ENCODE measurements at regions of chr17 and their contacts with region 1.

Region 1: GRCh38 chr17:45135192-45135977 is at the start of gene ACBD4:
- DNase-seq: peak; percentile 98 to 99
- ATAC-seq: peak; percentile 86 to 96 (median 88)
- H3K4me3 ChIP-seq: peak within 1 kb of the TSS; percentile 81
- H3K4me3 Mint-ChIP-seq: peak within 1 kb of the TSS; percentile 90
- H3K27ac ChIP-seq: peak within 1 kb of the TSS; percentile 69
- H3K27ac Mint-ChIP-seq: peak within 1 kb of the TSS; percentile 77 to 90
- H3K4me1 ChIP-seq: peaks cover 33% of the 10 kb centered on the region
- H3K4me1 Mint-ChIP-seq: peaks cover 12 to 20% of the 10 kb centered on the region in 2 donors
- H3K27me3 ChIP-seq: no peaks in the 10 kb centered on the region
- H3K27me3 Mint-ChIP-seq: peaks cover 0 to 3% of the 10 kb centered on the region in 2 donors
- CTCF ChIP-seq: peak; percentile 100
- total RNA-seq, gene ACBD4: 12.0 to 15.9 (median 14.2) TPM

Region 2: DNA sequence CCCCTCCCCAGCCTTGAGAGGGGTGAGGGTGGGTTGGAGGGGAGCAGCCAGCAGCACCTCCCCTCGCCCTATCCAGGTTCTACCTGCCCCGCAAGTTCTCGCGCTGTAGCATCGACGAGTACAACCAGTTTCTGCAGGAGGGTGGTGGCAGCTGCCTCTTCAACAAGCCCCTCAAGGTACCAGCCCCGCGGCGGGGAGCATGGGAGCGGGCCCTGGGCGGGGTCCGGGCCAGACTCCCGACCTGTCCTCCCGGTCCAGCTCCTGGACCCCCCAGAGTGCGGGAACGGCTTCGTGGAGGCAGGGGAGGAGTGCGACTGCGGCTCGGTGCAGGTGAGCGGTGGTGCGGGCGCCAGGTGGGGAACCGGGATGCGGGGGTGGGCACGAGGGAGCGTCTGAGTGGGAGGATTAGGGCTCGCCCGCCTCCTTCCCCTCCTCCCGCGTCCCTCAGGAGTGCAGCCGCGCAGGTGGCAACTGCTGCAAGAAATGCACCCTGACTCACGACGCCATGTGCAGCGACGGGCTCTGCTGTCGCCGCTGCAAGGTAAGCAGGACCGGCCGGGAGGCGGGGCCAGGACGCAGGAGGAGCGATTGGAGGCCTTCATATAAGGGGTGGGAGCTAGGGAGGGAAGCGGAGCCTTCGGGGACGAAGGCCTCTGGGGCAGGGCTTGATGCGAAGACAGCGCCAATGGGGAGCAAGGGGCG is 360.1 kb before region 1 on chr17:
- intact Hi-C with region 1: loop called (anchors 2 kb)
- DNase-seq: peak; percentile 82 to 99
- ATAC-seq: peak; percentile 87 to 91 (median 91)
- H3K4me3 ChIP-seq: peak overlapping the region; percentile 52
- H3K4me3 Mint-ChIP-seq: peak overlapping the region; percentile 91
- H3K27ac ChIP-seq: no peak overlapping the region
- H3K27ac Mint-ChIP-seq: peak overlapping the region in 1 of 2 donors; percentile 66
- H3K4me1 ChIP-seq: peaks cover 29% of the 10 kb centered on the region
- H3K4me1 Mint-ChIP-seq: peaks cover 0 to 27% of the 10 kb centered on the region in 2 donors
- H3K27me3 ChIP-seq: peaks cover 2% of the 10 kb centered on the region
- H3K27me3 Mint-ChIP-seq: peaks cover 0 to 7% of the 10 kb centered on the region in 2 donors
- CTCF ChIP-seq: peak; percentile 58

Region 3: DNA sequence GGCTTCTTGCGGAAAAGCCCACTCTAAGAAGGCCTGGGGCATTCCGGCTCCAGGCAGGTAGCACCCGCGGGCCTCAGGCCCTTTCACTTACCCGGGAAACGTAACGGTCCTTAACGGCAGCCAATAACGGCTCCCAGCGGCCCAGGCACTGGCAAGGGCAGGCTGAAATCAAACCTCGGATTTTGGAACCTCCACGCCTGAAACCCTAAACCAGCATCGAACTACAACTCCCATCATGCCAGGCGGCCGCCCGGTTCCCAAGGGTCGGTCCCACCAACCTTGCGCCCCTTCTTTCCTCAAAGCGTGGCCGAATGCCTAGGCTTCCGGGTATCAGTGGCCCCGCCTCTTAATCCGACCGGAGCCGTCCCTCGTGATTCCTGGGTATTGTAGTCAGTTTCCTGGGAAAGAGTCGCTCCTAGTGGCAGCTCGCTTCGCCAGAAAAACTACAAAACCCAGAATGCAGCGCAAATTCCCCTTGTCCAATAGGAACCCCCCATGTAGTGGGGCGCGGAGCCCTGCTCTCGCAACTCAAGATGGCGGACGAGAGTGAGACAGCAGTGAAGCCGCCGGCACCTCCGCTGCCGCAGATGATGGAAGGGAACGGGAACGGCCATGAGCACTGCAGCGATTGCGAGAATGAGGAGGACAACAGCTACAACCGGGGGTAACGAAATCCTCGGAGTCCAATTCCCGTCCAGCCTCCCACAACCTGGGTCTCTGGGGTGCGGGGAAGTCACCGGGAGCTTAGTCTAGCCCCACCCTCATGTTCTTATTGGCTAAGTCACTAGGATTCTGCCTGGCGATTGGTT is 74.4 kb before region 1 on chr17 and contains the start of gene NMT1:
- intact Hi-C with region 1: loop called (anchors 2 kb)
- DNase-seq: peak; percentile 90 to 98
- ATAC-seq: peak; percentile 89 to 97 (median 89)
- H3K4me3 ChIP-seq: peak within 1 kb of the TSS; percentile 87
- H3K4me3 Mint-ChIP-seq: peak within 1 kb of the TSS; percentile 91
- H3K27ac ChIP-seq: peak within 1 kb of the TSS; percentile 84
- H3K27ac Mint-ChIP-seq: peak within 1 kb of the TSS; percentile 90 to 100
- H3K4me1 ChIP-seq: peaks cover 20% of the 10 kb centered on the region
- H3K4me1 Mint-ChIP-seq: peaks cover 26 to 31% of the 10 kb centered on the region in 2 donors
- H3K27me3 ChIP-seq: no peaks in the 10 kb centered on the region
- H3K27me3 Mint-ChIP-seq: no peaks in the 10 kb centered on the region
- CTCF ChIP-seq: no peak
- total RNA-seq, gene NMT1: 56.6 to 94.7 (median 77.6) TPM

Region 4: DNA sequence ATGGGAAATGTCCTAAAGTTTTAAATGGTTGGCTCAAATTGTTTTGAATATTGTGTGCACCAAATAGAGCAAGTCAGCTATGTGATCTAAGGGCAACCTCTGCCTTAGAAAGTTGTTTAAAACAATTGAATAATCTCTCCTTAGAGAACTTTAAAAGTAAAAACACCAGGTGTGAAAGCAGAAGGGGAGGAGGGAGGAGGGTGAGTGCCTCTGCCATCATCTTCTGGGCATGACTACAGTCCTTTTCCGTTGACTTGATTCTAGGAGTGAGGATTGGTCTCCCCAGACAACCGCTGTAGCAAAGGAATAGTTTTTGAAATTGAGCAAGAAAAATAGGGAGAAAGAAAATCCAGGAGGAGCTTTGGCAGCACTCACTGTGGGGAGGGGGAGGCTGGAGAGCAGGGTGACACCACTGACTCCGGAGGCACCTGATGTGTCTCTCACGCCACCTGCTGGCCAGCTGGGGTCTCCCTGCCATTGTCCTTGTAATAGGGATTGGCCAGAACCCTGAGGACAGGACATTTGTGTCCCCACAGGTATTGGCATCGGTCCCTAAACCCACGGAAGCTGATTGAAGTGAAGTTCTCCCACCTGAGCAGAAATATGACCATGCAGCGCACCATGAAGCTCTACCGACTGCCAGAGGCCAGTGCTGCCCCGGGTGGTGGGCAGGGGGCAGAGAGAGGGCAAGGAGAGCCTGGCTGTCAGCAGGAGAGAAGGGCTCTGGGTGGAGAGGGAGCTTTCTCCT is 36.3 kb before region 1 on chr17:
- intact Hi-C with region 1: no loop called
- DNase-seq: peak; percentile 67 to 82
- ATAC-seq: peak; percentile 86 to 97 (median 91)
- H3K4me3 ChIP-seq: no peak overlapping the region
- H3K4me3 Mint-ChIP-seq: no peak overlapping the region
- H3K27ac ChIP-seq: no peak overlapping the region
- H3K27ac Mint-ChIP-seq: peak overlapping the region in 1 of 2 donors; percentile 64
- H3K4me1 ChIP-seq: no peaks in the 10 kb centered on the region
- H3K4me1 Mint-ChIP-seq: peaks cover 0 to 6% of the 10 kb centered on the region in 2 donors
- H3K27me3 ChIP-seq: no peaks in the 10 kb centered on the region
- H3K27me3 Mint-ChIP-seq: no peaks in the 10 kb centered on the region
- CTCF ChIP-seq: peak; percentile 82

Region 5: DNA sequence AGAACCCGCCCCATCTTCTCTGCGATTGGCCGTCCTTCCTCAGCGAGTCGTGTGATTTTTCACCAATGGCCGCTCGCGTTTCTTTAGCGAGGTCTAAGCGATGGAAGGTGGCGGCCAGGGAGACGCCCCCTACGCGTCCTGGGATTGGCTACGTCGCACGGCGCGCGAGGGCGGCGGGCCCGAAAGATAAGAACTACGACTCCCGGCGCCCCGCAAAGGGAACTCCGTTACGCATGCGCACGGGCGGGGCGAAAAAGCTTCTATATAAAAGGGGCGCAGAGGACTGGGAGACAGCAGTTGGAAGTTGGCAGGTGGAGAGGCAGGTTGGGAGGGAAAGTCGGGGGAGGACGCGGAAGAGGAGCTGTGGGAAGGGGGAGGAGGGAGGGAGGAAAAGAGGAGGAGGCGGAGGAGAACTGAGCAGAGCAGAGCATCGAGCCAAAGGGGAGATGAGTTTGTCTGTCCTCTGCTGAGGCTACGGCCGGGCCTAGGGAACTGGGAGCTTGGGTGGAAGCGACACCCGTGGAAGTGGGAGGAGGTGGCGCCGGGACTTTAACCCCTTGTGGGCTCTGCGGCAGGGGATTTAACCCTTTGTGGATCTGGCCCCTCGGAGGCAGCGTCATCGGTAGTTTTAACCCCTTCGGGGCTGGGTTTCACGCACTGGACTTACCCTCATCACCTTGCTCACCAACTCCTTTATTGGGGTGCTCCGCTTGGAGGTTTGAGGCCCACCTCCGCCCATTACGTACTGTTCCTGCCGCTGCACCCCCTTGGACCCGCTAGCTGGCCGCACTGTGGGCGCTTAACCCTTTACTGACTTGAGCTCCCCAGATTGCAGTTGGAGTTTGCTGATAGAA is 13.0 kb after region 1 on chr17 and contains the start of gene HEXIM1:
- intact Hi-C with region 1: loop called (anchors 1 kb)
- DNase-seq: peak; percentile 99
- ATAC-seq: peak; percentile 77 to 92 (median 82)
- H3K4me3 ChIP-seq: peak within 1 kb of the TSS; percentile 88
- H3K4me3 Mint-ChIP-seq: peak within 1 kb of the TSS; percentile 100
- H3K27ac ChIP-seq: peak within 1 kb of the TSS; percentile 98
- H3K27ac Mint-ChIP-seq: peak within 1 kb of the TSS; percentile 98 to 100
- H3K4me1 ChIP-seq: peaks cover 52% of the 10 kb centered on the region
- H3K4me1 Mint-ChIP-seq: peaks cover 51 to 65% of the 10 kb centered on the region in 2 donors
- H3K27me3 ChIP-seq: no peaks in the 10 kb centered on the region
- H3K27me3 Mint-ChIP-seq: no peaks in the 10 kb centered on the region
- CTCF ChIP-seq: no peak
- total RNA-seq, gene HEXIM1: 64.9 to 80.7 (median 79.8) TPM

Region 6: DNA sequence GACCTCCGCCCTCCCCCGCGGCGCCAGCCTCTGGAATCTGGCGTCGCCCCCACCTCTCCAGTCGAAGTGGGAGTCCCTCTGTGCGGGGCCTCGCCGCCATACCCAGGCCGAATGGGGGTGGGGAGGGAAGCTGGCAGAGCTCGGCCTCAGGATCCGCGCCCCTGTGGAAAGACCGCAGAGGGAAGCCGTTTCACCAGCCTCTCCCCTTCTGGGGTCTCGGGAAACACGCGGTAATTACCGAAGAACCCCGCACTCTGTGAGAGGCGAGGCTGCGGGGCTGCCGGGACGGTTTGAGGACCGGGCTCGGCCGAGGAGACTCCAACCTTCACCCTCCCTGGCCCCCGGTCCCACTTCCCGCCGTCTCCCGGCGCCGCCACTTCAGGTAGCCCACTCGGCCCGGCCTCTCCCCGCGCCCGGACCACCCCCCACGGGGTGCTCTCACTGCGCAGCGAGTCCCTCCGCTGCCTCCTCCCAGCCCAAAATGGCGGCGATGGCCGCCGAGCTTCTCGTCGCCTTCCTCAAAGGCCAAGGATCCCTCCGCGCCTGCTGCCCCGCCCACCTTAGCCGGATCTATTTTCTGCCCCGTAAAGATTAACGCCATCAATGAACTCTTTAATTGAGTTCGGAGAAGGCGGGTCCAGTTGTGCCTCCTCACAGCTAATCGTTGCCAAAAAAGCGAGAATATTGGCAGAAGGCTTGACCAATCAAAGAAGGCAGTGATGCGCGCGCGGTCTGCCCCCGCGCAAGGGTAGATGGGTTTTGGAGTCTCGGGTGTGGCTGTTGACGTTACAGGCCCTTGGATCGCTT is 25.8 kb after region 1 on chr17:
- intact Hi-C with region 1: loop called (anchors 1 kb)
- DNase-seq: peak; percentile 97 to 99
- ATAC-seq: peak; percentile 91 to 97 (median 93)
- H3K4me3 ChIP-seq: peak overlapping the region; percentile 99
- H3K4me3 Mint-ChIP-seq: peak overlapping the region; percentile 95
- H3K27ac ChIP-seq: peak overlapping the region; percentile 100
- H3K27ac Mint-ChIP-seq: peak overlapping the region; percentile 93 to 94
- H3K4me1 ChIP-seq: peaks cover 22% of the 10 kb centered on the region
- H3K4me1 Mint-ChIP-seq: peaks cover 33 to 46% of the 10 kb centered on the region in 2 donors
- H3K27me3 ChIP-seq: no peaks in the 10 kb centered on the region
- H3K27me3 Mint-ChIP-seq: no peaks in the 10 kb centered on the region
- CTCF ChIP-seq: no peak

Region 7: DNA sequence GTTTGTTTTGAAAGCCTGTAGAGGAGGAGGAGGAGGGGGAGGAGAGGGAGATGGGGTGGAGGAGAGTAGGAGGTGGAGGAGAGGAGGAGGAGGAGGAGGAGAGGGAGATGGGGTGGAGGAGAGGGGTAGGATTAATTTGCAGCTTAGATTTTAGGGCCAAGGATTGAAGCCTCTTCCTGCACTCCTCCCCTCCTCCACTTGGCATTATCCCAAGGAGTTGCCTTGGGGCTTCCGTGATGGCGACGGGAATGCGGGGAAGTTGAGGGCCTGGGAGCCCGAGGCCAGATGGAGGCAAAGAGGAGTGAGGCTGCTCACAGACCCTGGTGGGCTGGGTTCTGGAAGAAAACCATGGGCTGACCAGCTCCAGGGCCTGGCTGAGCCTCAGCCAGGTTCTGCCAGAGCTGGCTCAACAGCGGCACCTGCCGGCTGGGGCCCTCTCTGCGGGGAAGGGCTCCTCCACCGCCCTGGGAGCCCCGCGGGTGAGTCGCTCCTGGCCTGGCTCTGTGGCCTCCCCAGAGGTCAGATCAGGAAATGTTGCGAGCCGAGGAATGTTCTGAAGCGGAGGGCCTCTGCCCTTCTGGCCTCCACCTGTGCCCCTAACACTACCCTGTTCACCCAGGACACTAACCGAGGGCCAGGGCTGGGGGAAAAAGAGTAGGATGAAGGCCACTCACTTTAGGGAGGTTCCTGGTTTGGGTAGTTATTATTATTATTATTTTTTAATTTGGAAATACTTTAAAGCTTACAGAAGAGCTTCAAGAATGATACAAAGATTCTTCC is 62.4 kb after region 1 on chr17:
- intact Hi-C with region 1: loop called (anchors 1 kb)
- DNase-seq: peak; percentile 90
- ATAC-seq: peak; percentile 97 to 100 (median 100)
- H3K4me3 ChIP-seq: no peak overlapping the region
- H3K4me3 Mint-ChIP-seq: no peak overlapping the region
- H3K27ac ChIP-seq: no peak overlapping the region
- H3K27ac Mint-ChIP-seq: peak overlapping the region in 1 of 2 donors; percentile 36
- H3K4me1 ChIP-seq: peaks cover 6% of the 10 kb centered on the region
- H3K4me1 Mint-ChIP-seq: peaks cover 0 to 3% of the 10 kb centered on the region in 2 donors
- H3K27me3 ChIP-seq: no peaks in the 10 kb centered on the region
- H3K27me3 Mint-ChIP-seq: no peaks in the 10 kb centered on the region
- CTCF ChIP-seq: peak; percentile 99

Region 8: GRCh38 chr17:45385331-45385997 is 250.1 kb after region 1 on chr17:
- intact Hi-C with region 1: loop called (anchors 1 kb)
- DNase-seq: peak; percentile 86 to 93
- ATAC-seq: peak; percentile 90 to 98 (median 97)
- H3K4me3 ChIP-seq: no peak overlapping the region
- H3K4me3 Mint-ChIP-seq: no peak overlapping the region
- H3K27ac ChIP-seq: no peak overlapping the region
- H3K27ac Mint-ChIP-seq: no peak overlapping the region
- H3K4me1 ChIP-seq: peaks cover 7% of the 10 kb centered on the region
- H3K4me1 Mint-ChIP-seq: peaks cover 0 to 6% of the 10 kb centered on the region in 2 donors
- H3K27me3 ChIP-seq: no peaks in the 10 kb centered on the region
- H3K27me3 Mint-ChIP-seq: peaks cover 6 to 22% of the 10 kb centered on the region in 2 donors
- CTCF ChIP-seq: peak; percentile 94

Measured in natural killer cell (primary cell).